WTC11 (cell line): ENCODE measurements at regions of chr12 and their contacts with region 1.

Region 1: GRCh38 chr12:123938679-123939480 is 33.8 kb downstream of the CCDC92 start:
- DNase-seq: peak; percentile 69
- ATAC-seq: peak; percentile 95
- H3K4me3 Mint-ChIP-seq: no peak overlapping the region
- H3K27ac Mint-ChIP-seq: no peak overlapping the region
- H3K4me1 Mint-ChIP-seq: no peaks in the 10 kb centered on the region
- H3K27me3 Mint-ChIP-seq: peaks cover 4% of the 10 kb centered on the region
- CTCF ChIP-seq: peak; percentile 50

Region 2: GRCh38 chr12:123912415-123913380 is 26.2 kb before region 1 on chr12:
- CTCF ChIA-PET with region 1: interaction called, 17 read pairs
- POLR2A ChIA-PET with region 1: no interaction called
- DNase-seq: no peak
- ATAC-seq: no peak
- H3K4me3 Mint-ChIP-seq: no peak overlapping the region
- H3K27ac Mint-ChIP-seq: no peak overlapping the region; the same call in 1 of the 2 replicates
- H3K4me1 Mint-ChIP-seq: peaks cover 7% of the 10 kb centered on the region
- H3K27me3 Mint-ChIP-seq: peaks cover 16% of the 10 kb centered on the region
- CTCF ChIP-seq: no peak

Region 3: GRCh38 chr12:123928274-123928865 is 10.5 kb before region 1 on chr12:
- CTCF ChIA-PET with region 1: interaction called, 36 read pairs
- POLR2A ChIA-PET with region 1: no interaction called
- DNase-seq: no peak
- ATAC-seq: no peak; the same call in 1 of the 2 replicates
- H3K4me3 Mint-ChIP-seq: no peak overlapping the region
- H3K27ac Mint-ChIP-seq: no peak overlapping the region
- H3K4me1 Mint-ChIP-seq: no peaks in the 10 kb centered on the region
- H3K27me3 Mint-ChIP-seq: peaks cover 7% of the 10 kb centered on the region; the same call in 1 of the 2 replicates
- CTCF ChIP-seq: no peak

Region 4: GRCh38 chr12:123966596-123966995 is 27.7 kb after region 1 on chr12:
- CTCF ChIA-PET with region 1: interaction called, 12 read pairs
- POLR2A ChIA-PET with region 1: no interaction called
- DNase-seq: no peak
- ATAC-seq: no peak
- H3K4me3 Mint-ChIP-seq: no peak overlapping the region
- H3K27ac Mint-ChIP-seq: no peak overlapping the region
- H3K4me1 Mint-ChIP-seq: peaks cover 10% of the 10 kb centered on the region
- H3K27me3 Mint-ChIP-seq: peaks cover 100% of the 10 kb centered on the region
- CTCF ChIP-seq: no peak

Region 5: DNA sequence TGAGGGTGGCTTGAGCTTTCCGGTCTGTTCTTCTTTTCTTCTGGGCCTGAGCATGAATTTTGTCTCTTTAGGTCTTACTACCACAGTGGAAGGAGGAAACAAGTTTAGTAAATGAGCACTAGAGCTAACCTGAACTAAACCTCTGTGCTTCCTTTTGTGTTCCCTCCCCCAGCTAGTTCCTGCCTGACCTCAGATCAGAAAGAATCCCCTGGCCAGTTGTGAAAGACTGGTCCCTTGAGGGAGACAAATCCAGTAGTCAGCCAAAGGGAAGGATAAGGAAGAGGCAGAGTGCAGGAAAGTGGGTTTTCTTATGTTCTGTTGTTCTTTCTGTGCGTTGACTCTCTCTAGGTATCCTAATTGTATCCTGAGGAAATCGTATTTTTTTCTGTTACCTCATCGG is 51.6 kb after region 1 on chr12:
- CTCF ChIA-PET with region 1: no interaction called
- POLR2A ChIA-PET with region 1: no interaction called
- DNase-seq: no peak
- ATAC-seq: no peak
- H3K4me3 Mint-ChIP-seq: no peak overlapping the region
- H3K27ac Mint-ChIP-seq: no peak overlapping the region
- H3K4me1 Mint-ChIP-seq: peaks cover 10% of the 10 kb centered on the region
- H3K27me3 Mint-ChIP-seq: no peaks in the 10 kb centered on the region
- CTCF ChIP-seq: no peak